Activated B cell treated with CpG ODN at 0.5 μM for 24 hours (primary cell): ENCODE measurements at regions of chr18 and their contacts with region 1.

Region 1: GRCh38 chr18:80157708-80158343 is 48.8 kb downstream of the ADNP2 start:
- DNase-seq: peak; percentile 54
- ATAC-seq: peak; percentile 75
- H3K4me3 Mint-ChIP-seq: no peak overlapping the region
- H3K27ac Mint-ChIP-seq: no peak overlapping the region
- H3K4me1 Mint-ChIP-seq: peaks cover 9% of the 10 kb centered on the region
- H3K27me3 Mint-ChIP-seq: peaks cover 1% of the 10 kb centered on the region
- CTCF ChIP-seq: peak; percentile 92

Region 2: GRCh38 chr18:79797518-79798345 is 360.1 kb before region 1 on chr18 and contains the start of gene KCNG2:
- CTCF ChIA-PET with region 1: no interaction called
- POLR2A ChIA-PET with region 1: no interaction called
- intact Hi-C with region 1: loop called (anchors 2 kb)
- DNase-seq: peak; percentile 32
- ATAC-seq: peak; percentile 66
- H3K4me3 Mint-ChIP-seq: peak within 1 kb of the TSS; percentile 72
- H3K27ac Mint-ChIP-seq: no peak within 1 kb of the TSS
- H3K4me1 Mint-ChIP-seq: peaks cover 22% of the 10 kb centered on the region
- H3K27me3 Mint-ChIP-seq: peaks cover 25% of the 10 kb centered on the region
- CTCF ChIP-seq: no peak
- total RNA-seq, gene KCNG2: not detected in 2 replicates

Region 3: GRCh38 chr18:80108728-80109675 is 48.8 kb before region 1 on chr18 and contains the start of gene ADNP2:
- CTCF ChIA-PET with region 1: no interaction called
- POLR2A ChIA-PET with region 1: no interaction called
- intact Hi-C with region 1: no loop called
- DNase-seq: peak; percentile 63
- ATAC-seq: peak; percentile 66
- H3K4me3 Mint-ChIP-seq: peak within 1 kb of the TSS; percentile 84
- H3K27ac Mint-ChIP-seq: peak within 1 kb of the TSS; percentile 80
- H3K4me1 Mint-ChIP-seq: peaks cover 45% of the 10 kb centered on the region
- H3K27me3 Mint-ChIP-seq: no peaks in the 10 kb centered on the region
- CTCF ChIP-seq: no peak
- total RNA-seq, gene ADNP2: 19.2 and 19.7 TPM in 2 replicates

Region 4: DNA sequence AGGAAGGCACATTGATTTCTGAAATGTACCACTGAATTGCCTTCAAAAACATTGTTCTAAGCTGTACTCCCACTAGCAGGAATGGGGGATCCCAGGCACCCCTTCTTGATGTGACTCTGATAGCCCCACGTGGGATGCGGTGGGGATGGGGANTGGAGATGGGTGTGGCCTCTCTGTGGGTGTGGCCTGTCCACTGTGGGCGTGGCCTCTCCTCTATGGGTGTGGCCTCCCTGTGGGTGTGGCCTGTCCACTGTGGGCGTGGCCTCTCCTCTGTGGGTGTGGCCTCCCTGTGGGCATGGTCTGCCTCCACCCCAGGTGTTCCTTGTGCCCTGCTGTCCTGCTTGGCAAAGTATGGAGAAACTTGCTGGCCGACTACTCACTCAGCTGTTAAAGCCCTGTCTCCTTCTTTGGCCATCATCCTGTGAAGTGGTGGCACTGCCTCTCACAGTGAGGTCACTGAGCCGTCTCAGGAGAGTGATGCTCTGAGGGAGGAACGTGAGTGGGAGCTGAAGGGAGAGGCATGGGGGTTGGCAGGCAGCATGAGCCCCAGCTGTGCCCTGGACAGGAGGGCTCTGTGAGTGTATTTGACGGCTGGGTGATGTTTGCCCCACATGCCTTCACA is 96.2 kb after region 1 on chr18:
- CTCF ChIA-PET with region 1: interaction called, 10 read pairs
- POLR2A ChIA-PET with region 1: no interaction called
- intact Hi-C with region 1: no loop called
- DNase-seq: no peak
- ATAC-seq: peak; percentile 57
- H3K4me3 Mint-ChIP-seq: no peak overlapping the region
- H3K27ac Mint-ChIP-seq: no peak overlapping the region
- H3K4me1 Mint-ChIP-seq: no peaks in the 10 kb centered on the region
- H3K27me3 Mint-ChIP-seq: peaks cover 4% of the 10 kb centered on the region
- CTCF ChIP-seq: no peak